H1 (cell line): ENCODE measurements at regions of chr15 and their contacts with region 1.

Region 1: GRCh38 chr15:89177633-89178306 is 43.6 kb downstream of the RLBP1 start:
- DNase-seq: peak in 1 of 2 experiments; percentile 63
- H3K4me3 ChIP-seq: no peak overlapping the region
- H3K27ac ChIP-seq: no peak overlapping the region
- H3K4me1 ChIP-seq: no peaks in the 10 kb centered on the region
- H3K27me3 ChIP-seq: no peaks in the 10 kb centered on the region
- CTCF ChIP-seq: peak; percentile 41 to 90 (median 83)
- EP300 ChIP-seq: no peak
- POLR2A ChIP-seq: no peak
- RAD21 ChIP-seq: peak; percentile 86

Region 2: DNA sequence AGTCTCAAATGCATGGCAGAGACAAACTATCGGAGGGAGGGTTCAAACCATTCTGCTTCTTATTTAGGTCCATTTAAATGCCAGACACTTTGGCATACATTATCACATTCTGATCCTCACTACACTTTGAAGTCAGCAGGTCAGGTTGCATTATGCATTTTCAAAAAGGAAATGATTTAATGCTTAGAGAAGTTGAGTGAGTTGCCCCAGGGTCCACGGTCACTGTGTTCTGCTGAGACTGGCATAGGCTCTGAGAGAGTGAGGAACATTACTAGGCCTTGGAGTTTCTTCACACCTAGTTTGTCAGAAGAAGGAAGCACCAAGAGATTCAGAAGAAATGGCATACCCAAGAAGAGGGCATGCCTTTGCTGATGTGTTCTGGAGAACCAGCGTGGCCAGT is 420.8 kb before region 1 on chr15:
- CTCF ChIA-PET with region 1: no interaction called
- POLR2A ChIA-PET with region 1: no interaction called
- DNase-seq: no peak
- H3K4me3 ChIP-seq: no peak overlapping the region
- H3K27ac ChIP-seq: no peak overlapping the region
- H3K4me1 ChIP-seq: no peaks in the 10 kb centered on the region
- H3K27me3 ChIP-seq: no peaks in the 10 kb centered on the region; a peak in 1 of 7 replicates
- CTCF ChIP-seq: no peak
- EP300 ChIP-seq: no peak
- POLR2A ChIP-seq: no peak
- RAD21 ChIP-seq: no peak

Region 3: GRCh38 chr15:89119489-89120123 is 58.2 kb before region 1 on chr15:
- CTCF ChIA-PET with region 1: interaction called, 17 read pairs
- POLR2A ChIA-PET with region 1: no interaction called
- DNase-seq: no peak
- H3K4me3 ChIP-seq: no peak overlapping the region
- H3K27ac ChIP-seq: no peak overlapping the region
- H3K4me1 ChIP-seq: peaks cover 11 to 21% (median 17%) of the 10 kb centered on the region in 4 experiments
- H3K27me3 ChIP-seq: no peaks in the 10 kb centered on the region
- CTCF ChIP-seq: no peak
- EP300 ChIP-seq: no peak
- POLR2A ChIP-seq: no peak
- RAD21 ChIP-seq: no peak

Region 4: GRCh38 chr15:89150762-89151664 is 26.8 kb before region 1 on chr15:
- CTCF ChIA-PET with region 1: interaction called, 20 read pairs
- POLR2A ChIA-PET with region 1: no interaction called
- DNase-seq: no peak
- H3K4me3 ChIP-seq: no peak overlapping the region
- H3K27ac ChIP-seq: no peak overlapping the region
- H3K4me1 ChIP-seq: no peaks in the 10 kb centered on the region
- H3K27me3 ChIP-seq: no peaks in the 10 kb centered on the region
- CTCF ChIP-seq: no peak
- EP300 ChIP-seq: no peak
- POLR2A ChIP-seq: no peak
- RAD21 ChIP-seq: no peak

Region 5: GRCh38 chr15:89187976-89188514 is 10.3 kb after region 1 on chr15:
- CTCF ChIA-PET with region 1: interaction called, 36 read pairs
- POLR2A ChIA-PET with region 1: no interaction called
- DNase-seq: no peak
- H3K4me3 ChIP-seq: no peak overlapping the region
- H3K27ac ChIP-seq: no peak overlapping the region
- H3K4me1 ChIP-seq: no peaks in the 10 kb centered on the region; a peak in 1 of 7 replicates
- H3K27me3 ChIP-seq: no peaks in the 10 kb centered on the region
- CTCF ChIP-seq: no peak
- EP300 ChIP-seq: no peak
- POLR2A ChIP-seq: no peak
- RAD21 ChIP-seq: no peak

Region 6: GRCh38 chr15:89247441-89247840 is 69.7 kb after region 1 on chr15:
- CTCF ChIA-PET with region 1: no interaction called
- POLR2A ChIA-PET with region 1: no interaction called
- DNase-seq: no peak
- H3K4me3 ChIP-seq: no peak overlapping the region
- H3K27ac ChIP-seq: no peak overlapping the region
- H3K4me1 ChIP-seq: peaks cover 0 to 9% (median 3%) of the 10 kb centered on the region in 4 experiments; a peak in 5 of 7 replicates
- H3K27me3 ChIP-seq: peaks cover 0 to 2% (median 0%) of the 10 kb centered on the region in 4 experiments; a peak in 3 of 7 replicates
- CTCF ChIP-seq: no peak
- EP300 ChIP-seq: no peak
- POLR2A ChIP-seq: no peak
- RAD21 ChIP-seq: no peak

Region 7: GRCh38 chr15:89307046-89307587 is 129.3 kb after region 1 on chr15:
- CTCF ChIA-PET with region 1: no interaction called
- POLR2A ChIA-PET with region 1: no interaction called
- DNase-seq: no peak
- H3K4me3 ChIP-seq: no peak overlapping the region
- H3K27ac ChIP-seq: no peak overlapping the region
- H3K4me1 ChIP-seq: no peaks in the 10 kb centered on the region
- H3K27me3 ChIP-seq: no peaks in the 10 kb centered on the region
- CTCF ChIP-seq: no peak
- EP300 ChIP-seq: no peak
- POLR2A ChIP-seq: no peak
- RAD21 ChIP-seq: no peak

Region 8: GRCh38 chr15:89332446-89332845 is 154.7 kb after region 1 on chr15:
- CTCF ChIA-PET with region 1: no interaction called
- POLR2A ChIA-PET with region 1: no interaction called
- DNase-seq: no peak
- H3K4me3 ChIP-seq: peak overlapping the region in 1 of 4 experiments; percentile 27; a peak in 1 of 8 replicates
- H3K27ac ChIP-seq: no peak overlapping the region
- H3K4me1 ChIP-seq: peaks cover 0 to 16% (median 3%) of the 10 kb centered on the region in 4 experiments; a peak in 4 of 7 replicates
- H3K27me3 ChIP-seq: no peaks in the 10 kb centered on the region; a peak in 1 of 7 replicates
- CTCF ChIP-seq: peak; percentile 45 to 67 (median 47)
- EP300 ChIP-seq: no peak
- POLR2A ChIP-seq: no peak
- RAD21 ChIP-seq: no peak; a peak in 1 of 4 replicates